ENCODE measurements at regions of chr21 and their contacts with region 1.

Region 1: GRCh38 chr21:35095859-35096291 is 46.8 kb upstream of the RUNX1 start:
- DNase-seq: no peak
- ATAC-seq: no peak
- H3K4me3 ChIP-seq: no peak overlapping the region
- H3K27ac ChIP-seq: no peak overlapping the region
- H3K4me1 ChIP-seq: no peaks in the 10 kb centered on the region
- H3K27me3 ChIP-seq: no peaks in the 10 kb centered on the region
- CTCF ChIP-seq: no peak

Region 2: DNA sequence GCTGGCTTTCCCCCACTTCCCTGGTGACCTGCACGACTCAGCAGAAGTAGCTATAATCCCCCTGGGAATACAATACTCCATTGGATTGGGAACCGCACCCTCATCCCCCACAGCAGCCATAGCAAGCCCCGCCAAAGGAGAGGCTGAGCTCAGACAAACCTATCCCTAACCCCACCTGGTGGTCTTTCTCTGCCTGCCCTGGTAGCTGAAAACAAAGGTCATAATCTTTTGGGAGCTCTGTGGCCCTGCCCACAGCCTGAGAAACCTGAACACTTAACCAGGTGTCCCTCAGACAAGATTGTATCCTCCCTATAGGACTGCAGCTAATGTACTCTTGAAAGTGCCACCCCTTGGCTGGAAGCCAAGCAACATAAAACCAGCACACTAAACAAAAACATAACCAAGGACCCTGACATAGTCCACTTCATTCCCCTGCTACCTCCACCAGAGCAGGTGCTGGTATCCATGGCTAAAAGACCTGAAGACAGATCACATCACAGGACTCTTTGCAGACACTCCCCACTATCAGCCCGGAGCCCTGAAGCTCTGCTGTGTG is 24.8 kb after region 1 on chr21:
- CTCF ChIA-PET with region 1: no interaction called
- POLR2A ChIA-PET with region 1: no interaction called
- intact Hi-C with region 1: loop called (anchors 2 kb)
- DNase-seq: no peak
- ATAC-seq: no peak
- H3K4me3 ChIP-seq: no peak overlapping the region
- H3K27ac ChIP-seq: no peak overlapping the region
- H3K4me1 ChIP-seq: no peaks in the 10 kb centered on the region
- H3K27me3 ChIP-seq: no peaks in the 10 kb centered on the region
- CTCF ChIP-seq: no peak

Measured in PC-3 (cell line).